Activated CD4-positive, alpha-beta memory T cell treated with anti-CD3 and anti-CD28 coated beads for 36 hours (primary cell): ENCODE measurements at regions of chr14 and their contacts with region 1.

Region 1: DNA sequence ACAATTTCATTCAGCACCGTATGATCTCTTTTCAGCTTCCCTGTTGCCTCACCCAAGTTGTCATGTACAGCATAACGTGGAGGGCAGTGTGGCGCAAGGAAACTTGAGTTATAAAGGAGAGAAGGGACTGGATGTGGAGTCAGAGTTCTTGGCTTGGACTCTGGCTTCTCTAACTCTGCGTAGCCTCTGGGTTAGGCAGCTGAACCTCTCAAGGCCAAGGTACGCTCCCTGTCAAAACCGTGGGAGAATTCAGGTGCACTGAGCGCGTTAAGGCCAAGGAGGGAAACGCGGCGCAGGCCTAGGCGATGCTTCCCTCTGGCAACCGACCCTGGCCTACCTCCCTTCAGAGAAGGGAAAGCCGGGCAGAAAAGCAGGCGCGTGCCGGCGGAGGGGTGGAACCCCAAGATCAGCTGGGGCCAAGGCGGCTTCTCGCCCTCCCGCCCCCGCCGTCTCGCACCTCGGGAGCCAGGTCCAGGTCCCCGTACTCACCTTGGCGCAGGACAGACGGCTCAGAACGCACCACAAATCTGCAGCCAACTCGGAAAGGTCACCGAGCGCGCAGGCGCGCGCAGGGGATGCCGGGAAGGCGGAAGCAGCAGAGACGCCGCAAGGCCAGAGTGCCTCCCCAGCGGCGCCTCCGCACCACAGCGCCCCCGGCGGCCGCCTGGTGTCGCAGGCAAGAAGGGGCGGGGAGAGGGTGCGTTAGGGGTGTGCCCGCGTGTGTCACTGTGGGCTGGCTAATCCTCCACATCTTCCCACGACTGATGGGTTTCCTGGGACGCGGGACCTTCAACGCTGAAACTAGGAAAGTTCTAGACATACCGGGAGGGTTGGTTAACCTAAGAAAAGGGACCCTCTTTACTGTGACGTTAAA is 7.0 kb upstream of the TDRD9 start:
- DNase-seq: peak; percentile 96
- H3K4me3 Mint-ChIP-seq: peak overlapping the region; percentile 89
- H3K27ac Mint-ChIP-seq: peak overlapping the region; percentile 72
- H3K4me1 Mint-ChIP-seq: peaks cover 15% of the 10 kb centered on the region
- H3K27me3 Mint-ChIP-seq: peaks cover 6% of the 10 kb centered on the region

Region 2: GRCh38 chr14:103715052-103716000 is 205.9 kb before region 1 on chr14 and contains the starts of genes XRCC3 and ZFYVE21:
- CTCF ChIA-PET with region 1: no interaction called
- POLR2A ChIA-PET with region 1: no interaction called
- intact Hi-C with region 1: loop called (anchors 2 kb)
- DNase-seq: peak; percentile 100
- H3K4me3 Mint-ChIP-seq: peak within 1 kb of the TSS; percentile 86
- H3K27ac Mint-ChIP-seq: peak within 1 kb of the TSS; percentile 85
- H3K4me1 Mint-ChIP-seq: peaks cover 60% of the 10 kb centered on the region
- H3K27me3 Mint-ChIP-seq: peaks cover 2% of the 10 kb centered on the region
- total RNA-seq, gene XRCC3: 41.9 to 48.5 TPM
- total RNA-seq, gene ZFYVE21: 14.9 to 15.9 TPM

Region 3: GRCh38 chr14:103847451-103848188 is 73.6 kb before region 1 on chr14 and contains the start of gene PPP1R13B:
- CTCF ChIA-PET with region 1: interaction called, 4 read pairs
- POLR2A ChIA-PET with region 1: no interaction called
- intact Hi-C with region 1: loop called (anchors 1 kb)
- DNase-seq: peak; percentile 94
- H3K4me3 Mint-ChIP-seq: peak within 1 kb of the TSS; percentile 90
- H3K27ac Mint-ChIP-seq: peak within 1 kb of the TSS; percentile 61
- H3K4me1 Mint-ChIP-seq: peaks cover 12% of the 10 kb centered on the region
- H3K27me3 Mint-ChIP-seq: no peaks in the 10 kb centered on the region
- total RNA-seq, gene PPP1R13B: 13.5 to 14.8 TPM

Region 4: DNA sequence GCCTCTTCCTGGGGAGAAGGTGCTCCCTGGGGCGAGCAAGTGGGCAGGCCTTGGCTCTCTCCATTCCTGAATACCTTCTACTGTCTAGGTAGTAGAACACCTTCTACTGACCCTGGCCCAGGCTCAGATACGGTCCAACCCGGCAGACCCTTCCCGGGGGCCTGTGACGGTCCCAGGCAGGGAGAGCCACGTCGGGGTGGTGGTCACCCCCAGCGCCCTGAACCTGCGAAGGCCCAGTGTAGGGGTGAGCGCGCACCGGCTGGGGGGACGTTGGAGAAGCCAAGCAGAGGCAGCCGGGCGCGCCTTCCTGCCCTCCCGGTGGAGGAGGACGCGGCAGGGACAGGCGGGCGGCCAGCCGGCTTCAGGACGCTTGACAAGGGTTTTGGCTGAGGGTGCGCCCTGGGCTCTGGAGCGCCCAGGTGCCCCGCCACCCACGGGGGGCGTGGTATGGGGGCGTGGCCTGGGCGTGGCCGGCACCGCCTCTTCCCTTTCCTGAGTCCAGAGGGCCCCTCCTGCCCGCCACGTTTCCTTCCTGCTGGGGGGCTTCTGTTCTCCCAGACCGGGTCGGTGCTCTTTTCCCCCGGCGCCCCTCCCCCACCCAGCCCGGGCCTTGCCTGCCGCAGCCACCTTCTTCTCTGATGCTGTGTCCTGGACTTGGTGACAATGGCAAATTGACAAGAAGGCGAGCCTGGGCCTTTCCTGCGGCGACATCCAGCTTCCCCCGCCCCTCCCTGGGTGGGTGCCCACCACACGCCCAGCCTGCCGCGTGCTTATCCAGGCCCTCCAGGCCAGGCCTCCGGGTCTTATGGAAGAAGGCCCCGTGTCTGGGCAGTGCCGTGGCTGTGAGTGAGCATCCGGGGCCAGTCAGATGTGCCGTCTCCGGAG is 49.4 kb before region 1 on chr14:
- CTCF ChIA-PET with region 1: no interaction called
- POLR2A ChIA-PET with region 1: no interaction called
- intact Hi-C with region 1: loop called (anchors 5 kb)
- DNase-seq: peak; percentile 84
- H3K4me3 Mint-ChIP-seq: peak overlapping the region; percentile 84
- H3K27ac Mint-ChIP-seq: peak overlapping the region; percentile 56
- H3K4me1 Mint-ChIP-seq: peaks cover 5% of the 10 kb centered on the region
- H3K27me3 Mint-ChIP-seq: no peaks in the 10 kb centered on the region

Region 5: GRCh38 chr14:103899316-103899715 is 21.9 kb before region 1 on chr14:
- CTCF ChIA-PET with region 1: interaction called, 17 read pairs
- POLR2A ChIA-PET with region 1: no interaction called
- intact Hi-C with region 1: no loop called
- DNase-seq: no peak
- H3K4me3 Mint-ChIP-seq: no peak overlapping the region
- H3K27ac Mint-ChIP-seq: no peak overlapping the region
- H3K4me1 Mint-ChIP-seq: peaks cover 3% of the 10 kb centered on the region
- H3K27me3 Mint-ChIP-seq: no peaks in the 10 kb centered on the region

Region 6: DNA sequence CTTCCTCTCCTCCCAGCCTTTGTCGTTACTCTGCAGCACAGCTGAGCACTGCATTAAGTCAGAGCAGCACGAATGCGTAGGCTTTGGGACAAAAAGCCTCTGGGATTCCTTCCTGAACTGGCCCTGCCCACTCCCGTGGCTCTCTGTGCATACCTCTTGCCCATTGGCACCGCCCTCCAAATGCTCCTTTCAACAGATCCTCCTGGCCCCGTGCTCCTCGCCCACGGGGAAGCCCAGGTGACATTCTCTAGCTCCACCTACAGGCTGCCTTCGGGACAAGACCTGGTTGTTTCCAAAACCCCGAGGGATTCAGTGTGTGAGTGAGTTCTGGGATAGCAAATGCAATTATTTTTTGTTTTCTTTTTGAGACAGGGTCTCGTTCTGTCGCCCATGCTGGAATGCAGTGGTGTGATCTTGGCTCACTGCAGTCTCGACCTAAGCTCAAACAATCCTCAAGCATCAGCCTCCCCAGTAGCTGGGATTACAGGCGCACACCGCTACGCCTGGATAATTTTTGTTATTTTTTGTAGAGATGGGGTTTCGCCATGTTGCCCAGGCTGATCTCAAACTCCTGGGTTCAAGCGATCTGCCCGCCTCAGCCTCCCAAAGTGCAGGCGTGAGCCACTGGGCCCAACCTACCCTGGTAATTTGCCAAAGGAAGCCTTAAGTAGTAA is 10.8 kb before region 1 on chr14:
- CTCF ChIA-PET with region 1: interaction called, 28 read pairs
- POLR2A ChIA-PET with region 1: no interaction called
- intact Hi-C with region 1: no loop called
- DNase-seq: peak; percentile 81
- H3K4me3 Mint-ChIP-seq: peak overlapping the region; percentile 27
- H3K27ac Mint-ChIP-seq: peak overlapping the region; percentile 61
- H3K4me1 Mint-ChIP-seq: peaks cover 4% of the 10 kb centered on the region
- H3K27me3 Mint-ChIP-seq: no peaks in the 10 kb centered on the region

Region 7: DNA sequence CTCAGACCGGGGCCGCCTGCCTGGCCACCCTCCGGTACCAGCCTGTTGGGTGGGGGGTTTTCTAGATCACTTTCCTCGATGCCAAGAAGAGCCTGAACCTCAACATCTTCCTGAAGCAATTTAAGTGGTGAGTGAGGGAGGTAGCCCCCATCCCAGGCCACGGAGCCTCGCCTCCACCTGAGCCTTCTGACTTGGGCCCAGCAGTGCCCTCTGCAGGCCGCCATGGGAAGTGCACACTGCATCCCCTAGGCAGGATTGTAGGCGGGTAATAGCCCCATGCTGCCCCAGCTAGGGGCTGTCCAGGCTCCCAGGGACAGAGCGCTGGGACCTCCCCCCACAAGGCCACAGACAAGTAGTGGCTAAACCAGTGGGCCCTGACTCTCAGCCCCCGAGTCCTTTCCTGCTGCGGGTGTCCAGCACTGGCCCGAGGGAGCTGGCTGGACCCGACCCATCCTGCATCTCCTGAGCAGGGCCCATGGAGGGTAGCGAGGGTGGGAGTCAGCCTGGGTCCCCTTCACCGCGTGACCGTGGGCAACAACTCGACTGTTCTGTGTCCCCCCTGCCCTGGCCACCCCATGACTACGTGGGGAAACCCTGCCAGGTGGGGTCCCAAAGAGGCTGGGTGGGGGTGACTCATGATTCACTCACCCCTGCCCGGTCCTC is 787.5 kb after region 1 on chr14:
- CTCF ChIA-PET with region 1: no interaction called
- POLR2A ChIA-PET with region 1: no interaction called
- intact Hi-C with region 1: no loop called
- DNase-seq: peak; percentile 80
- H3K4me3 Mint-ChIP-seq: no peak overlapping the region
- H3K27ac Mint-ChIP-seq: no peak overlapping the region
- H3K4me1 Mint-ChIP-seq: peaks cover 1% of the 10 kb centered on the region
- H3K27me3 Mint-ChIP-seq: no peaks in the 10 kb centered on the region